ENCODE measurements at regions of chr11 and their contacts with region 1.

Region 1: GRCh38 chr11:123086305-123086704 is 24.4 kb upstream of the HSPA8 start:
- DNase-seq: no peak
- ATAC-seq: no peak
- H3K4me3 ChIP-seq: no peak overlapping the region
- H3K27ac ChIP-seq: no peak overlapping the region
- H3K4me1 ChIP-seq: peaks cover 5% of the 10 kb centered on the region
- H3K27me3 ChIP-seq: no peaks in the 10 kb centered on the region
- CTCF ChIP-seq: no peak
- POLR2A ChIP-seq: no peak
- RAD21 ChIP-seq: no peak

Region 2: DNA sequence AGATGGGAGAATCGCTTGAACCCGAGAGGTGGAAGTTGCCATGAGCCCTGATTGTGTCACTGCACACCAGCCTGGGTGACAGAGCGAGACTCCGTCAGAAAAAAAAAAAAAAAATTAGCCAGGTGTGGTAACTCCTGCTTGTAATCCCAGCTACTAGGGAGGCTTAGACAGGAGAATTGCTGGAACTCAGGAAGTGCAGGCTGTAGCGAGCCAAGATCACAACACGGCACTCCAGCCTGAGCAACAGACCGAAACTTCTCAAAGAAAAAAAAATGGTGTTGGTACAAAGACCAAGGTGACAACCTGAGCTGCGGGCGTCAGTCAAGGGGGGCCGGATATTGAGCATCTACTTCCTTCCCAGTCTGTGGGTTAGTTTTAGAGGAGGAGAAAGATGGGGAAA is 24.1 kb after region 1 on chr11:
- CTCF ChIA-PET with region 1: no interaction called
- POLR2A ChIA-PET with region 1: no interaction called
- dilution Hi-C with region 1: no loop called
- in situ Hi-C with region 1: no loop called
- intact Hi-C with region 1: no loop called
- DNase-seq: no peak
- ATAC-seq: no peak
- H3K4me3 ChIP-seq: no peak overlapping the region
- H3K27ac ChIP-seq: no peak overlapping the region
- H3K4me1 ChIP-seq: peaks cover 13% of the 10 kb centered on the region
- H3K27me3 ChIP-seq: no peaks in the 10 kb centered on the region
- CTCF ChIP-seq: no peak
- POLR2A ChIP-seq: no peak
- RAD21 ChIP-seq: no peak

Region 3: GRCh38 chr11:123284454-123284853 is 198.1 kb after region 1 on chr11:
- CTCF ChIA-PET with region 1: no interaction called
- POLR2A ChIA-PET with region 1: interaction called, 17 read pairs
- dilution Hi-C with region 1: no loop called
- in situ Hi-C with region 1: no loop called
- intact Hi-C with region 1: no loop called
- DNase-seq: no peak
- ATAC-seq: no peak
- H3K4me3 ChIP-seq: no peak overlapping the region
- H3K27ac ChIP-seq: no peak overlapping the region
- H3K4me1 ChIP-seq: no peaks in the 10 kb centered on the region
- H3K27me3 ChIP-seq: peaks cover 42% of the 10 kb centered on the region
- CTCF ChIP-seq: no peak
- POLR2A ChIP-seq: no peak
- RAD21 ChIP-seq: no peak

Region 4: GRCh38 chr11:123301696-123302400 is 215.5 kb after region 1 on chr11:
- CTCF ChIA-PET with region 1: no interaction called
- POLR2A ChIA-PET with region 1: no interaction called
- dilution Hi-C with region 1: no loop called
- in situ Hi-C with region 1: no loop called
- intact Hi-C with region 1: no loop called
- DNase-seq: peak; percentile 11
- ATAC-seq: peak; percentile 94
- H3K4me3 ChIP-seq: peak overlapping the region; percentile 32
- H3K27ac ChIP-seq: no peak overlapping the region
- H3K4me1 ChIP-seq: peaks cover 6% of the 10 kb centered on the region; the same call in 1 of the 2 replicates
- H3K27me3 ChIP-seq: peaks cover 21% of the 10 kb centered on the region; the same call in 1 of the 2 replicates
- CTCF ChIP-seq: peak; percentile 70
- POLR2A ChIP-seq: no peak
- RAD21 ChIP-seq: peak; percentile 63

Region 5: DNA sequence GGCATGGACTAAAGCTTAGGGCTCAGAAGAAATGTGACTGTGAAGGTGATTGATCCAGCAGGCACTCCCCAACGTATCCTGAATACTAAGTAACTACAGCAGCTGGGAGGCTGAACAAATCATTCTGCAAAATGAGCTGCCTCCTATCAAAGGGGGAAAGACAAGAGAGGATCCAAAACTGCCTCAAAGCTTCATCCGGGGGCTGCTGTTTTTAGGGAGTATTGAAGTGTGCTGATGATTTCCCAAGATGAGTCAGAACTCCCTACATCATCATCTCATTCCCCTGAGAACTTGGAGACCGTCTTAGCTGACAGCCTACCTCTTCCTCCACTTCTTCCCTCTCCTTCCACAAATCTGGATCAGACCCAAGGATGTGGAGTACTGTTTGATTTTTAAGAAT is 235.3 kb after region 1 on chr11:
- CTCF ChIA-PET with region 1: no interaction called
- POLR2A ChIA-PET with region 1: no interaction called
- dilution Hi-C with region 1: no loop called
- in situ Hi-C with region 1: no loop called
- intact Hi-C with region 1: no loop called
- DNase-seq: no peak
- ATAC-seq: no peak
- H3K4me3 ChIP-seq: no peak overlapping the region
- H3K27ac ChIP-seq: no peak overlapping the region
- H3K4me1 ChIP-seq: no peaks in the 10 kb centered on the region
- H3K27me3 ChIP-seq: peaks cover 36% of the 10 kb centered on the region
- CTCF ChIP-seq: no peak
- POLR2A ChIP-seq: no peak
- RAD21 ChIP-seq: no peak